Left cardiac atrium (tissue), 4 donors: ENCODE measurements at regions of chr10 and their contacts with region 1.

Region 1: GRCh38 chr10:123043409-123043925 is 34.7 kb downstream of the ACADSB start:
- DNase-seq: no peak
- ATAC-seq: peak in 1 of 2 donors; percentile 61

Region 2: GRCh38 chr10:121891103-121891502 is 1152.4 kb before region 1 on chr10:
- intact Hi-C with region 1: no loop called
- DNase-seq: no peak
- ATAC-seq: no peak

Region 3: GRCh38 chr10:123132576-123133477 is 89.4 kb after region 1 on chr10:
- intact Hi-C with region 1: loop called in 1 of 2 experiments (anchors 5 kb)
- DNase-seq: peak; percentile 89
- ATAC-seq: peak; percentile 77 to 86

Region 4: DNA sequence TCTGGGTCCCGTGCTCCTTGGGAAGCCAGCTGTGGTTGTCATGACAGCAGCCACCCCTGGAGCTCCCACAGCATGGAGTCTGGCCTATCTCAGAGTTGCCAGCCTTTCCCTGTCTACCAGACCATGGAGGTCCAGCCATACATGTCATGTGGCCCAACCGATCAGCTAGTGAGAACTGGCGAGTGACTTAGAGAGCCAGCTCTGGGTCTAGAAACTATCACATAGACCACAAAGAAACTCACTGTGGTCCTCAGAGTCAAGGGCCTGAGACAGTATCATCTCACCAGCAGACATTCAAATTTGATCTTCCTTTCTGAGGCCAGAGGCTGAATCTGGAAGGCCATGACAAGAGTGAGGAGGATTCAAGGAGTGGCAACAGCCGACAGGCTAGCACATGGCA is 399.4 kb after region 1 on chr10:
- intact Hi-C with region 1: no loop called
- DNase-seq: no peak
- ATAC-seq: no peak